Head of caudate nucleus (tissue), 42 donors: ENCODE measurements at regions of chr2 and their contacts with region 1.

Region 1: GRCh38 chr2:38508311-38509039 is 94.3 kb downstream of the HNRNPLL start:
- DNase-seq: peak; percentile 50 to 91 (median 82)

Region 2: DNA sequence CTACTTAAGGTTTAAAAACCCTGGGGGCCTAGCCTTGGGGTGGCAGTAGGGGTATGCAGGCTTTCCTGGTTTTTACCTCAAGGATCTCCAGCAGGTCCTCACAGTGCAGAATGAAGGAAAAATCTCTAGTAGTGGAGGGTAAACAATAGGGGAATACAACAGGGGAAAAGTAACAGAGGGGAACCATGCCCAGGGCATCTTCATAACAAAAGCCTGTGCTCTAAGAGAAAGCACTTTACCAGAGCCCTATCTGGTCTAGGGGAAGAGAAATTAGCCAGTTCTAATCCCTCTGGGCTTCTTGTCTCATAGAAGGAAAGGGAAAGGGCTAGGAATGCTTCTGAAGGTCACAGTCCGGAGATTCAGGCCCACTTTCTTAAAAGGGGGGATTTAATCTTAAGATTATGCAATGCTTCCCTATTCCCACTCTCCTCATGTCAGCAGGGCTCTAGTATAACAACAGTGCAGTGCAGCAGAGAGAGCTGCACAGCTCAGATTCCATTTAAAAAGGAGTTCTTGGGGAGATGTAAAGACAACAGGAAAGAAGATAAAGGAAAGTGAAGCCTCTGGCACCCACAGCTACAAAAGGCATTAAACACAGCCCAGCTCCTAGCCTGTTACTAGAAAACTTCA is 283.5 kb before region 1 on chr2:
- intact Hi-C with region 1: no loop called
- DNase-seq: no peak

Region 3: GRCh38 chr2:38377050-38377828 is 131.2 kb before region 1 on chr2 and contains the start of gene ATL2:
- intact Hi-C with region 1: loop called (anchors 10 kb)
- DNase-seq: peak; percentile 89 to 98 (median 95)

Region 4: DNA sequence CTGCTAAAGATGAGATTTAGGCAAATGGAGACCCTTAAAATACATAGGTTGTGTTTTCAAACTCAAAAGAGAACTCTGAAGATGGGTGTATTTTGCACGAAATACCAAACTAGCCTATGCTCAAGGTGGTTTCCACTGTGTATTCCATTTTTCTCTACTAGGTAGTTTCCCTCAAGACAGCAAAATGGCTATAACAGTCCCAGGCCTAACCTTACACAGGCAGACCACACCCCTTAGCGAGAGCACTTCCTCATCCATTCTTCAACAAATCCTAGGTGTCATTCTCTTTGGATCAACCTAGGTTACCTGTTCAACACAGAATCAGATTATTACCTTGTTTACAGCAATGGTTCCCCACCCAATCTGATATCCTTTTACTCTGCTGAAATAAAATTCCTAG is 51.6 kb after region 1 on chr2:
- intact Hi-C with region 1: no loop called
- DNase-seq: no peak